Left ventricle myocardium superior (tissue), 1 donor: ENCODE measurements at regions of chr7 and their contacts with region 1.

Region 1: GRCh38 chr7:12322284-12322902 is 81.3 kb downstream of the VWDE start:
- DNase-seq: no peak
- ATAC-seq: no peak

Region 2: DNA sequence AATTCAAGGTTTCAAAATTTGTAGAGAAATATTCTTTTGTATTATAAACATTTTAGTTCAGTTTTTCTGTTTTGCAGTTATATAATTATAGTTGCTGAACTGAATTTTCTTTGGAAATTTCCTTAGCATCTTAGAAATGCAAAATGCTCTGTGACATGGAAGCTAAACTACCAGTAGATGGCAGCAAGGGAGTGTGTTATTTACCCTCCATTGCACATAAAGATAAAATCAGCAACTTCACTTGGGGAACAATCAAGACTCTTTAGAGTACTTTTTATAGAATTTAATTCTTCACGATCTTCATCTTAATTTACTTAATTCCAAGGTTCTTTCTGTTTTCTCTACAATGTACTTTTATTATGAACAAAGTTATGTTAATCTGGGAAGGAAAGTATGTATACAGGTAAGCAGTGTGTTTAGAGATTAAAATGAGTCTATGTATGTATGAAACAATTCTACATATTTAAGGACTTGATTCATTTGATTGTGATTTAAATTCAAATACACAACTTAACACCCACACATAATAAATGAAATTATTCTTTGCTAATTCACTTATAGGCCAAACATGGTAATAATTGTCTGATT is 894.6 kb before region 1 on chr7:
- intact Hi-C with region 1: loop called (anchors 10 kb)
- DNase-seq: no peak
- ATAC-seq: no peak

Region 3: DNA sequence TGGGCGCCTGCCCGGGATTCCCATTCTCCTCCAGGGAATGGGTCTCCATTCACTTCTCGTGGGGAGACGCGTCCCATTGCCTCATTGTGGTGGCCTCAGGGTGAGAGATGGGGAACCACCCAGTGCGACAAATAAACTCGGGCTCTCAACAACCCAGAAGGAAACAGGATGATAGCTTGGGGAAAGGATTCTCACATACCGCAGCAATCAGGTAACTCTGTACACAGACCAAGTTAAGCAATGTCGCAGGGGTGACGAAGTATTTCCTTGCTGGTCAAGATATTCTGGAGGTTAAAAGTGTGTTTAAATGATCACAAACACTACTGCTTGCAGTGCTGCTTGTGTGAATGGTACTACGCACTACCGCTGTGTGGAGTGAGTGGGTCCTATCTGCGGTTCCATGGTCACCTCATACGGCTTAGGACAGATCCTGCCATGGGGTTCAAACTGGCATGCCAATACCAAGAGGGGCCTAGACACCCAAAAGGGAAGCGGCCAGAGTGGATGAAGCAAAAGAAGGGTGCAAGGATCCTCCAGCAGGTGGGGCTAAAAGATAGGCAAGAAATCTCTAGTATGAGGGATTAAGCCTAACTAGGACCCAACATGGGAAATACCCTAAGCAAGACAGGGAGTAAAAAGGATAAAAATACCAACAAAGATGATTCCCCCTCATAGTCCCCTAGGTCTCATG is 255.1 kb before region 1 on chr7:
- intact Hi-C with region 1: loop called (anchors 5 kb)
- DNase-seq: no peak
- ATAC-seq: peak; percentile 57